Endothelial cell of umbilical vein (primary cell): ENCODE measurements at regions of chr4 and their contacts with region 1.

Region 1: DNA sequence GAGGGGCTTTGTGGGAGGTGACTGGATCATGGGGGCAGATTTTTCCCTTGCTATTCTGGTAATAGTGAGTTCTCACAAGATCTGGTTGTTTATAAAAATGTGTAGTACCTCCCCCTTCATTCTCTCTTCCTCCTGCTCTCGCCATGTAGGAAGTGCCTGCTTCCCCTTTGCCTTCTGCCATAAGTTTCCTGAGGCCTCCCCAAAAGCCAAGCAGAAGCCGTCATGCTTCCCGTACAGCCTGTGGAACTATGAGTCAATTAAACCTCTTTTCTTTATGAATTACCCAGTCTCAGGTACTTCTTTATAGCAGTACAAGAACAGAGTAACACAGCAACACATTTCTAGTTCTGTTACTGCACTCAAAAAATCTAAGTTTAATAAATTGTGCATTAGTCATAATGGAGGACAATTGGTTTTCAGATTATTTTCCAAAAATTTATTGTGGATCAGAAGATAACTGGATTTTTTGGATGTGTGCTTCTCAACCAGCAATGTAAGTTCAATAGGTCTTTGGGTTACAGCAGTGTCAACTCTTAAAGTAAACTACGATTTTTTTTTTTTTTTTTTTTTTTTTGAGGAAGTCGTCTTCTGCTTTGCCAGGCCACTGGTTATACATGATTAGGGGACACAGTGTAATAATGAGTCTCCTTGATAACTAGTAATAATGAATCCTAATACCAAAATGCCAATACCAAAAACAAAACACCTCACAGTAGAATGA is 69.9 kb downstream of the CHIC2 start:
- DNase-seq: peak; percentile 97
- H3K4me3 ChIP-seq: peak overlapping the region in 1 of 3 experiments; percentile 24
- H3K27ac ChIP-seq: peak overlapping the region; percentile 93
- H3K4me1 ChIP-seq: peaks cover 31% of the 10 kb centered on the region
- H3K27me3 ChIP-seq: no peaks in the 10 kb centered on the region
- CTCF ChIP-seq: no peak
- POLR2A ChIP-seq: no peak

Region 2: GRCh38 chr4:53161051-53161786 is 833.3 kb before region 1 on chr4:
- CTCF ChIA-PET with region 1: no interaction called
- POLR2A ChIA-PET with region 1: no interaction called
- dilution Hi-C with region 1: no loop called
- intact Hi-C with region 1: no loop called
- DNase-seq: no peak
- H3K4me3 ChIP-seq: no peak overlapping the region
- H3K27ac ChIP-seq: no peak overlapping the region
- H3K4me1 ChIP-seq: no peaks in the 10 kb centered on the region
- H3K27me3 ChIP-seq: no peaks in the 10 kb centered on the region
- CTCF ChIP-seq: no peak
- POLR2A ChIP-seq: no peak

Region 3: DNA sequence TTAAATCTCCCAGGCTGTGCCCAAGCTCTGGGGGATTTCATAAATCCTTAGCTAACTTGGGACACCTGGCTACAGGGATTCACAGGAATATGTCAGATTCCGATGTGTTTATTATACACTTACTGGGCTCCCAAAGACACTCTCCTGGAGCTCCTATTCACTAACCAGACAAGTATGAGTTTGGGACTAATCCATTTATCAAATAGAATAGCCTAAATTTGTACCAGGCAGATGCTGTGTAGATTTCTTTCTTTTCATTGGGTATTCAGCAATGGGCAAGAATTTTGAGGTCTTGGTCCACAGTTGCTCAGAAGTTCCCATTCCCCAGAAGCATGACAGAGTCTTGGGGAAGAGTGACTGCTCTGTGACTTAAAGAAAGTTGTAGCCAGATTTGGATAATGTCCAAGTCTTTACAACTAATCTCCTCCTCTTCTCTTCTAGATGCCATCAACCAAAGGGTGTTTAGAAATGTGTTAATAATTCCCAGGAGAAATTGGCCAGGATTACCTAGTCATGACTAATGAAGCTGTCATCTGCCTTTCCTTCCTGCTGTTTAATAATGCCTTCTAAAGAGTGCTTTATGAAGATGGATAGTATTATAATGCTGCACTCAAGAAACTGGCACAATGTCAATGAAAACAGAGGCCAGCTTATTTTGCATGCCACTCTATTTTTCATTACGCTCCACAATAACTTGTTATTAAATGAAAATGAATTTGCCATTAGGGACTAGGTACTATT is 51.0 kb before region 1 on chr4:
- CTCF ChIA-PET with region 1: no interaction called
- POLR2A ChIA-PET with region 1: no interaction called
- dilution Hi-C with region 1: no loop called
- intact Hi-C with region 1: loop called (anchors 1 kb)
- DNase-seq: peak; percentile 98
- H3K4me3 ChIP-seq: no peak overlapping the region
- H3K27ac ChIP-seq: peak overlapping the region; percentile 52
- H3K4me1 ChIP-seq: peaks cover 17% of the 10 kb centered on the region
- H3K27me3 ChIP-seq: no peaks in the 10 kb centered on the region
- CTCF ChIP-seq: no peak
- POLR2A ChIP-seq: no peak

Region 4: DNA sequence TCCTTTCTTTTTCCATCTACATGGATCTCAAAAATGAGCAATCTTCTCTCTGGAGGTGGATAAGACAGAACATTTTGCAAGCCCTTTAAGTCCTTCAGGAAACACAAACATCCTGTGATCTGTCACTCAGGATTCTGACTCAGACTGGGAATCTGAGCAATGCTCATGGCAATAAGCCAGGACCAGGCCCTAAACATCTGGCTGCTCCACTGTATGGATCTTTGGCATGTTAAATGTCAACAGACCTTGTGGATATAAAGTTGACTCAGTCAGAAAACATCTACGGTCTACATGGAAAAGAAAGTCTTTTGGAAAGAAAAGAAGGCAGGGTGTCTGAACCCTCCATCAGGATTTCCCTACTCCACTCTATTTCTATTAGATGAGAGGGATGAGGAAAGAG is 87.6 kb after region 1 on chr4:
- CTCF ChIA-PET with region 1: no interaction called
- POLR2A ChIA-PET with region 1: no interaction called
- dilution Hi-C with region 1: no loop called
- intact Hi-C with region 1: loop called (anchors 2 kb)
- DNase-seq: peak; percentile 96
- H3K4me3 ChIP-seq: peak overlapping the region in 1 of 3 experiments; percentile 20
- H3K27ac ChIP-seq: peak overlapping the region; percentile 77
- H3K4me1 ChIP-seq: peaks cover 39% of the 10 kb centered on the region
- H3K27me3 ChIP-seq: no peaks in the 10 kb centered on the region
- CTCF ChIP-seq: no peak
- POLR2A ChIP-seq: peak; percentile 67

Region 5: GRCh38 chr4:54217642-54218495 is 223.3 kb after region 1 on chr4:
- CTCF ChIA-PET with region 1: no interaction called
- POLR2A ChIA-PET with region 1: no interaction called
- dilution Hi-C with region 1: no loop called
- intact Hi-C with region 1: loop called (anchors 5 kb)
- DNase-seq: peak; percentile 84
- H3K4me3 ChIP-seq: peak overlapping the region; percentile 34 to 78 (median 58)
- H3K27ac ChIP-seq: peak overlapping the region; percentile 30
- H3K4me1 ChIP-seq: peaks cover 2% of the 10 kb centered on the region
- H3K27me3 ChIP-seq: peaks cover 2 to 7% of the 10 kb centered on the region in 2 experiments
- CTCF ChIP-seq: peak; percentile 82 to 84
- POLR2A ChIP-seq: no peak